Gastrocnemius medialis (tissue), 4 donors: ENCODE measurements at regions of chr1 and their contacts with region 1.

Region 1: GRCh38 chr1:23867953-23868556 is at the start of gene FUCA1:
- DNase-seq: peak; percentile 91 to 92
- ATAC-seq: peak; percentile 96 to 98
- H3K4me3 ChIP-seq: peak within 1 kb of the TSS; percentile 86 to 94 (median 90)
- H3K27ac ChIP-seq: peak within 1 kb of the TSS; percentile 79 to 84 (median 81)
- H3K4me1 ChIP-seq: peaks cover 17 to 20% of the 10 kb centered on the region in 2 donors
- H3K27me3 ChIP-seq: no peaks in the 10 kb centered on the region
- CTCF ChIP-seq: peak; percentile 91 to 98 (median 96)
- POLR2A ChIP-seq: peak; percentile 71 to 79
- total RNA-seq, gene FUCA1: 8.1 to 15.4 (median 12.4) TPM

Region 2: GRCh38 chr1:23691499-23692307 is 176.4 kb before region 1 on chr1 and contains the start of gene RPL11:
- in situ Hi-C with region 1: no loop called
- intact Hi-C with region 1: loop called (anchors 10 kb)
- DNase-seq: peak; percentile 94 to 96
- ATAC-seq: peak; percentile 99 to 100
- H3K4me3 ChIP-seq: peak within 1 kb of the TSS; percentile 85 to 99 (median 93)
- H3K27ac ChIP-seq: peak within 1 kb of the TSS; percentile 84 to 93 (median 91)
- H3K4me1 ChIP-seq: peaks cover 45 to 47% of the 10 kb centered on the region in 2 donors
- H3K27me3 ChIP-seq: no peaks in the 10 kb centered on the region
- CTCF ChIP-seq: peak; percentile 80 to 90 (median 90)
- POLR2A ChIP-seq: peak; percentile 83 to 94
- total RNA-seq, gene RPL11: 302 to 593 (median 504) TPM

Region 3: GRCh38 chr1:23772049-23772853 is 95.8 kb before region 1 on chr1:
- in situ Hi-C with region 1: no loop called
- intact Hi-C with region 1: loop called (anchors 1 kb)
- DNase-seq: peak; percentile 58 to 80
- ATAC-seq: peak; percentile 83 to 92
- H3K4me3 ChIP-seq: no peak overlapping the region
- H3K27ac ChIP-seq: no peak overlapping the region
- H3K4me1 ChIP-seq: peaks cover 4 to 14% of the 10 kb centered on the region in 2 donors
- H3K27me3 ChIP-seq: no peaks in the 10 kb centered on the region
- CTCF ChIP-seq: peak; percentile 69 to 93 (median 80)
- POLR2A ChIP-seq: no peak

Region 4: GRCh38 chr1:23809751-23810171 is 58.3 kb before region 1 on chr1:
- in situ Hi-C with region 1: loop called in 2 of 4 experiments (anchors 5 to 10 kb)
- intact Hi-C with region 1: loop called (anchors 1 kb)
- DNase-seq: peak; percentile 61 to 76
- ATAC-seq: peak; percentile 90 to 91
- H3K4me3 ChIP-seq: no peak overlapping the region
- H3K27ac ChIP-seq: peak overlapping the region in 3 of 4 donors; percentile 39 to 53 (median 52)
- H3K4me1 ChIP-seq: peaks cover 0 to 6% of the 10 kb centered on the region in 2 donors
- H3K27me3 ChIP-seq: no peaks in the 10 kb centered on the region
- CTCF ChIP-seq: peak; percentile 64 to 90 (median 85)
- POLR2A ChIP-seq: no peak

Region 5: GRCh38 chr1:23825076-23825761 is 42.8 kb before region 1 on chr1 and contains the start of gene HMGCL:
- in situ Hi-C with region 1: no loop called
- intact Hi-C with region 1: loop called (anchors 5 kb)
- DNase-seq: peak; percentile 82 to 88
- ATAC-seq: peak; percentile 85 to 89
- H3K4me3 ChIP-seq: peak within 1 kb of the TSS; percentile 91 to 99 (median 96)
- H3K27ac ChIP-seq: peak within 1 kb of the TSS; percentile 96 to 100 (median 98)
- H3K4me1 ChIP-seq: peaks cover 12 to 15% of the 10 kb centered on the region in 2 donors
- H3K27me3 ChIP-seq: no peaks in the 10 kb centered on the region
- CTCF ChIP-seq: no peak
- POLR2A ChIP-seq: peak; percentile 93 to 94
- total RNA-seq, gene HMGCL: 19.1 to 30.0 (median 29.5) TPM

Region 6: GRCh38 chr1:23923592-23924499 is 55.8 kb after region 1 on chr1:
- in situ Hi-C with region 1: no loop called
- intact Hi-C with region 1: loop called (anchors 5 kb)
- DNase-seq: no peak
- ATAC-seq: no peak
- H3K4me3 ChIP-seq: no peak overlapping the region
- H3K27ac ChIP-seq: no peak overlapping the region
- H3K4me1 ChIP-seq: peaks cover 13 to 20% of the 10 kb centered on the region in 2 donors
- H3K27me3 ChIP-seq: no peaks in the 10 kb centered on the region
- CTCF ChIP-seq: no peak
- POLR2A ChIP-seq: no peak

Region 7: GRCh38 chr1:23959041-23959460 is 91.0 kb after region 1 on chr1:
- in situ Hi-C with region 1: no loop called
- intact Hi-C with region 1: no loop called
- DNase-seq: peak; percentile 86 to 87
- ATAC-seq: peak; percentile 79 to 81
- H3K4me3 ChIP-seq: peak overlapping the region; percentile 79 to 96 (median 85)
- H3K27ac ChIP-seq: peak overlapping the region; percentile 94 to 100 (median 98)
- H3K4me1 ChIP-seq: peaks cover 24 to 40% of the 10 kb centered on the region in 2 donors
- H3K27me3 ChIP-seq: no peaks in the 10 kb centered on the region
- CTCF ChIP-seq: peak in 3 of 5 experiments; percentile 39 to 57 (median 41)
- POLR2A ChIP-seq: no peak